B cell (primary cell): ENCODE measurements at regions of chr15 and their contacts with region 1.

Region 1: DNA sequence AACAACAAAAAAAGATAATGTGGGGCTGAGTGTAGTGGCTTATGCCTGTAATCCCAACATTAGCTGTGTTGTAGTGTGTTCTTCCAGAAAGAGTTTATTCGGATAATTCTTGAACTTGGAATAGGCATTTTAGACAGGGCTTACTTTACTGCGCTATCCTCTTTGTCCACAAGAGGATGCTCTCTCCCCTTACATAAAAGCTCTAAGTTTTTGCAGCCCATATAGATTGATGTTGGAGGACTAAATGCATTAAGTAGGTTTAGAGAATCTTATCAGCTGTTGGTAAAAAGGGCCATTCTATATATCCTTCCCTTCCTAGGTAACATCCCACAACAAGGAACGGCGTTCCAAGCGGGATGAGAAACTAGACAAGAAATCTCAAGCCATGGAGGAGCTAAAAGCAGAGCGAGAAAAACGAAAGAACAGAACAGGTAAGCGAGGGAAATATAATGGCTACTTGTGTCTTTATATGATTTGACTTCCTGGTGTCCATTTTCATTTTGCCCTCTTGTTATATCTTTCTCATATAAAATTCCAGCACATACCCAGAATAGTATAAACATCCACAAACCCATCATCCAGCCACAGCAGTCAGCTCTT is 27.8 kb upstream of the ITPKA start:
- DNase-seq: peak; percentile 60
- ATAC-seq: peak; percentile 54
- H3K4me3 ChIP-seq: no peak overlapping the region
- H3K4me3 Mint-ChIP-seq: no peak overlapping the region
- H3K27ac ChIP-seq: no peak overlapping the region
- H3K27ac Mint-ChIP-seq: no peak overlapping the region
- H3K4me1 ChIP-seq: no peaks in the 10 kb centered on the region
- H3K4me1 Mint-ChIP-seq: peaks cover 5% of the 10 kb centered on the region
- H3K27me3 ChIP-seq: no peaks in the 10 kb centered on the region
- H3K27me3 Mint-ChIP-seq: no peaks in the 10 kb centered on the region
- CTCF ChIP-seq: peak; percentile 95

Region 2: GRCh38 chr15:41443275-41443674 is 22.6 kb before region 1 on chr15:
- CTCF ChIA-PET with region 1: interaction called, 10 read pairs
- POLR2A ChIA-PET with region 1: no interaction called
- intact Hi-C with region 1: no loop called
- DNase-seq: no peak
- ATAC-seq: no peak
- H3K4me3 ChIP-seq: no peak overlapping the region
- H3K4me3 Mint-ChIP-seq: no peak overlapping the region
- H3K27ac ChIP-seq: no peak overlapping the region
- H3K27ac Mint-ChIP-seq: no peak overlapping the region
- H3K4me1 ChIP-seq: no peaks in the 10 kb centered on the region
- H3K4me1 Mint-ChIP-seq: peaks cover 8% of the 10 kb centered on the region
- H3K27me3 ChIP-seq: no peaks in the 10 kb centered on the region
- H3K27me3 Mint-ChIP-seq: no peaks in the 10 kb centered on the region
- CTCF ChIP-seq: no peak

Region 3: GRCh38 chr15:41506796-41507341 is 40.9 kb after region 1 on chr15:
- CTCF ChIA-PET with region 1: interaction called, 15 read pairs
- POLR2A ChIA-PET with region 1: no interaction called
- intact Hi-C with region 1: loop called (anchors 1 kb)
- DNase-seq: no peak
- ATAC-seq: no peak
- H3K4me3 ChIP-seq: no peak overlapping the region
- H3K4me3 Mint-ChIP-seq: no peak overlapping the region
- H3K27ac ChIP-seq: no peak overlapping the region
- H3K27ac Mint-ChIP-seq: no peak overlapping the region
- H3K4me1 ChIP-seq: peaks cover 20 to 21% of the 10 kb centered on the region in 2 donors
- H3K4me1 Mint-ChIP-seq: peaks cover 15% of the 10 kb centered on the region
- H3K27me3 ChIP-seq: peaks cover 0 to 20% (median 8%) of the 10 kb centered on the region in 4 experiments
- H3K27me3 Mint-ChIP-seq: peaks cover 6% of the 10 kb centered on the region
- CTCF ChIP-seq: no peak

Region 4: DNA sequence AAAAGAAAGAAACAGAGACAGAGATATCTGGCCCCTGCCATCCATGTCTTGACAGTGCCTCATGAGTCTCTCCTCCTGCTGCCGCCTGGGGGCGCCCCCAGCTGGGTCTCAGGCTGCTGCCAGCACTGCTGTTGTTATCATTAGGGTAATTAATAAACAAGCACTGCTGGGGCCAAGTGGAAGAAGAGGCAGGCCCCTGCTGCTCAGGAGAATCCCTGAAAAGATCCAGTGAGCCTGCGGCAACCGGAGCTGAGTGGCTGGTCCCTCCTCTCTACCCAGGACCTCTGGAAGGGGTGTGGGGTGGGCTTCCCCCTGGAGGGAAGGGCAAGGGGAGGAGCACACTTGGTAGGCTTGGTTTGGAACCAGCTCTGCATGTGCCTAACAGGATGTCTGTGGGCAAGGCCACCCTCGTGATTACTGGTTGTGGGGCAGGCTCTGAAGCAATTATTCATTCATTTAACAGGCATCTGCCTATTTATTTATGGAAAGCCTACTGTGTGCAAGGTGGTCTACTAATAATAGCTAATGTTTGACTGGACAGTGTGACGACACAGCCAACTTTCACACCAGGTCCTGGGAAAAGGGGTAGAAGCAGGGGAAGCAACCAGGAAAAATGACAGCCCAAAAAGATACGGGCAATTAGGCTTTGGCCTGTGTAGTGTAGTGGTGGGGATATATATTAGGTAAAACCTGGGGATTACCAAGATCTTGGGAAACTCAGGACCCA is 91.9 kb after region 1 on chr15:
- CTCF ChIA-PET with region 1: interaction called, 10 read pairs
- POLR2A ChIA-PET with region 1: no interaction called
- intact Hi-C with region 1: no loop called
- DNase-seq: peak; percentile 77
- ATAC-seq: peak; percentile 53
- H3K4me3 ChIP-seq: peak overlapping the region in 2 of 5 experiments; percentile 43 to 65
- H3K4me3 Mint-ChIP-seq: peak overlapping the region; percentile 87
- H3K27ac ChIP-seq: no peak overlapping the region
- H3K27ac Mint-ChIP-seq: no peak overlapping the region
- H3K4me1 ChIP-seq: peaks cover 20 to 25% of the 10 kb centered on the region in 2 donors
- H3K4me1 Mint-ChIP-seq: peaks cover 24% of the 10 kb centered on the region
- H3K27me3 ChIP-seq: peaks cover 0 to 46% (median 15%) of the 10 kb centered on the region in 4 experiments
- H3K27me3 Mint-ChIP-seq: peaks cover 38% of the 10 kb centered on the region
- CTCF ChIP-seq: peak; percentile 89

Region 5: GRCh38 chr15:41585127-41586047 is 119.5 kb after region 1 on chr15:
- CTCF ChIA-PET with region 1: interaction called, 14 read pairs
- POLR2A ChIA-PET with region 1: no interaction called
- intact Hi-C with region 1: loop called (anchors 5 kb)
- DNase-seq: peak; percentile 59
- ATAC-seq: peak; percentile 53
- H3K4me3 ChIP-seq: peak overlapping the region; percentile 28 to 62 (median 38)
- H3K4me3 Mint-ChIP-seq: peak overlapping the region; percentile 86
- H3K27ac ChIP-seq: no peak overlapping the region
- H3K27ac Mint-ChIP-seq: peak overlapping the region; percentile 53
- H3K4me1 ChIP-seq: peaks cover 9 to 10% of the 10 kb centered on the region in 2 donors
- H3K4me1 Mint-ChIP-seq: peaks cover 6% of the 10 kb centered on the region
- H3K27me3 ChIP-seq: peaks cover 0 to 22% (median 10%) of the 10 kb centered on the region in 4 experiments
- H3K27me3 Mint-ChIP-seq: peaks cover 50% of the 10 kb centered on the region
- CTCF ChIP-seq: peak; percentile 34

Region 6: DNA sequence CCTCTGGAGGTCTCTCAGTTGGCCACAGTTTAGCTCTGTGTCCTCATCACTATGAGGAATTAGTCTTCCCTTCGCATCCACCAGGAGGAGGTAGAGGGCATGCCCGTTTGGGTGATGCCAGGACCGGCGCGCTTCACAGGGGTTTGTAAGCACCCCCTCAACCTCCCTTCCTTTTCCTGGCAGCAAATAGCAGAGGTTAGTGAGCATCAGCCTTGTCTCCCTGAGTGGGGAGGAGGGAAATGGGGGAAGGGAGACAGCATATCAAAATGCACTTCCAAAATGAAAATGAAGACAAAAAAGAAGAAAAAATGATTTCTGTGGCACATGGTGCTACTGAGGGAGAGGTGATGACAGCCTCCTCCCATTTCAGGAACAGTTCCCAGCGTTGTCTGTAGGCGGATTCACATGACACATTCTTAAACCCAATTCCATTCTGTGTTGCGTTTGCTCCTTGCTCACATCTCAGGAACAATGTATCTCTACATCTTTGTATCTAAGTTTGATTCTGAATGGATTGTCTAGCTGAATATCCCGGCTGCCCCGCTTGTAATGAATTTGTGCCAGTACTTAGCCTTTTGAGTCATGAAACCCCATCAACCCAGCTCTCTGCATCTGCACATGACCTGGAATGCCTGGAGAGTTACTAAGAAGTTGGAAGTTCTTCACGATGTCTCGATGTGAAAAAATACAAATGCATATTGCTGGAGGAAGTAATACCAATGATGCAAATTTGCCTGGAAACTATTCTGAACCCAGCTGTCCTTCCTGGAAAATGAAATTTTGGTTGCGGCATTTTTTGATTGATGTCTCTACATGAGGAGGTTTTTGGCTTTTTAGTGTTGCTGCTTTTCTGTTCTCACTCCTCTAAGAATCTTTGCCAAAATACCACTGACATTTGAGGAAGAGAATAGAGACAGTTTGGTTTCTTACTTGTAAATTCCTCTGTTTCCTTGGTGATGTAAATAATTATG is 138.3 kb after region 1 on chr15:
- CTCF ChIA-PET with region 1: interaction called, 35 read pairs
- POLR2A ChIA-PET with region 1: no interaction called
- intact Hi-C with region 1: loop called (anchors 5 kb)
- DNase-seq: peak; percentile 74
- ATAC-seq: peak; percentile 85
- H3K4me3 ChIP-seq: peak overlapping the region in 3 of 5 experiments; percentile 2 to 31 (median 29)
- H3K4me3 Mint-ChIP-seq: peak overlapping the region; percentile 77
- H3K27ac ChIP-seq: no peak overlapping the region
- H3K27ac Mint-ChIP-seq: no peak overlapping the region
- H3K4me1 ChIP-seq: peaks cover 8 to 10% of the 10 kb centered on the region in 2 donors
- H3K4me1 Mint-ChIP-seq: peaks cover 9% of the 10 kb centered on the region
- H3K27me3 ChIP-seq: peaks cover 0 to 17% (median 5%) of the 10 kb centered on the region in 4 experiments
- H3K27me3 Mint-ChIP-seq: peaks cover 34% of the 10 kb centered on the region
- CTCF ChIP-seq: peak; percentile 80